ENCODE measurements at regions of chr2 and their contacts with region 1.

Region 1: DNA sequence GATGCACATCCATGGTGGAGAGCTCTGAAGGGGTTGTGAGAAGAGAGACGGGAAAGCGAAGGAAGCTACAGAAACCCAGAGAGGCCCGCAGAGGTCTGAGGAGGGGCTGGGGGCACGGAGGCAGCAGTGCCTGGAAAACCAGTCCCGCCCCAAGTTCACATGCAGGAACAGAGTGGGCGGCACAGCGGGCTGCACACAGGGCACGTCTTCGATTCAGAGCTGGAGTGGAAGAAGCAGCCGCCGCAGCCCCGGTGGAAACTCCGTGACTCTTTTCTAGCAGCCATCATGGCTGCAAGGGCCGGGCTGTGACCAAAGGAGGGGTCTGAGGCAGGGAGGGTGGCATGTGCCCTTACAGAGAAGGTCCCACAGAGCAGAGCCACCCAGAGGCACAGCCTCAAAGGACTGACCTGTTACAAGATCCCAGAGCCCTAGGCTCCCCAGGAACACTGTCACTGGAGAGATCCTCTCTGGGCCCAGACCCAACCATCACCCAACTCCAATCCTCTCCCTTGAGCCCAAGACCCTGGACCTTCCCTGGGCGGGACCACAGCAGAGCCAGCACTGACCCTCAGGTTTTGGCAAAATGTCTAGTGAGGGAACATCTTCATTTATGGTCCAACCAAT is 10.7 kb downstream of the PRKAG3 start:
- DNase-seq: no peak
- H3K4me3 ChIP-seq: no peak overlapping the region
- H3K4me3 Mint-ChIP-seq: peak overlapping the region in 1 of 2 donors; percentile 19
- H3K27ac ChIP-seq: peak overlapping the region; percentile 53 to 68
- H3K27ac Mint-ChIP-seq: peak overlapping the region; percentile 81 to 96 (median 93)
- H3K4me1 ChIP-seq: peaks cover 22 to 25% of the 10 kb centered on the region in 2 donors
- H3K4me1 Mint-ChIP-seq: peaks cover 47% of the 10 kb centered on the region
- H3K27me3 ChIP-seq: peaks cover 0 to 2% of the 10 kb centered on the region in 2 donors
- H3K27me3 Mint-ChIP-seq: peaks cover 5 to 23% (median 11%) of the 10 kb centered on the region in 3 donors
- CTCF ChIP-seq: no peak

Region 2: GRCh38 chr2:218662377-218662776 is 158.5 kb before region 1 on chr2:
- intact Hi-C with region 1: no loop called
- DNase-seq: no peak
- H3K4me3 ChIP-seq: no peak overlapping the region
- H3K4me3 Mint-ChIP-seq: no peak overlapping the region
- H3K27ac ChIP-seq: no peak overlapping the region
- H3K27ac Mint-ChIP-seq: peak overlapping the region in 2 of 7 donors; percentile 20 to 26
- H3K4me1 ChIP-seq: peaks cover 15 to 19% of the 10 kb centered on the region in 2 donors
- H3K4me1 Mint-ChIP-seq: peaks cover 21% of the 10 kb centered on the region
- H3K27me3 ChIP-seq: no peaks in the 10 kb centered on the region
- H3K27me3 Mint-ChIP-seq: peaks cover 0 to 3% (median 0%) of the 10 kb centered on the region in 3 donors
- CTCF ChIP-seq: no peak

Region 3: DNA sequence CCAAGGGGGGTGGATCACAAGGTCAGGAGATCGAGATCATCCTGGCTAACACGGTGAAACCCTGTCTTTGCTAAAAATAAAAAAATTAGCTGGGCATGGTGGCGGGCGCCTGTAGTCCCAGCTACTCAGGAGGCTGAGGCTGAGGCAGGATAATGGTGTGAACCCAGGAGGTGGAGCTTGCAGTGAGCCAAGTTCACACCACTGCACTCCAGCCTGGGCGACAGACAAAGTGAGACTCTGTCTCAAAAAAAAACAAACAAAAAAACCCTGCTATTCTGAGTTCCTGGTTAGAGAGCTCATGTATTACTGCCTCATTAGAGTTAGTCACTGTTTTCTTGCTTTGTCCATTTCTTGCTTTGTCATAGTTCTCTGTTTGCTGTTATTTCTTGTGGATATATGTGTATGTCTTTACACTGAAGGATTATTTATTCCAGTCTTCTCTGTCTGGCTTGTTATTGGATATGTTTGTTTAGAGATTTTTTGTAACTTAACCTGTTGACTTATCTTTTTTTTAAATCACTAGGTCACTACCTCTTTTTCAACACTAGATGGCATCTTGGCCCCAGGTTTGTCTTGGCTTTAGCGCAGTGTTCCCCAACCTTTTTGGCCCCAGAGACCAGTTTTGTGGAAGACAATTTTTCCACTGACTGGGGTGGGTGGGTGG is 93.2 kb before region 1 on chr2:
- intact Hi-C with region 1: loop called (anchors 5 kb)
- DNase-seq: peak; percentile 44 to 67 (median 61)
- H3K4me3 ChIP-seq: no peak overlapping the region
- H3K4me3 Mint-ChIP-seq: no peak overlapping the region
- H3K27ac ChIP-seq: no peak overlapping the region
- H3K27ac Mint-ChIP-seq: peak overlapping the region in 6 of 7 donors; percentile 38 to 90 (median 74)
- H3K4me1 ChIP-seq: peaks cover 43 to 46% of the 10 kb centered on the region in 2 donors
- H3K4me1 Mint-ChIP-seq: peaks cover 49% of the 10 kb centered on the region
- H3K27me3 ChIP-seq: no peaks in the 10 kb centered on the region
- H3K27me3 Mint-ChIP-seq: no peaks in the 10 kb centered on the region
- CTCF ChIP-seq: peak; percentile 80

Region 4: DNA sequence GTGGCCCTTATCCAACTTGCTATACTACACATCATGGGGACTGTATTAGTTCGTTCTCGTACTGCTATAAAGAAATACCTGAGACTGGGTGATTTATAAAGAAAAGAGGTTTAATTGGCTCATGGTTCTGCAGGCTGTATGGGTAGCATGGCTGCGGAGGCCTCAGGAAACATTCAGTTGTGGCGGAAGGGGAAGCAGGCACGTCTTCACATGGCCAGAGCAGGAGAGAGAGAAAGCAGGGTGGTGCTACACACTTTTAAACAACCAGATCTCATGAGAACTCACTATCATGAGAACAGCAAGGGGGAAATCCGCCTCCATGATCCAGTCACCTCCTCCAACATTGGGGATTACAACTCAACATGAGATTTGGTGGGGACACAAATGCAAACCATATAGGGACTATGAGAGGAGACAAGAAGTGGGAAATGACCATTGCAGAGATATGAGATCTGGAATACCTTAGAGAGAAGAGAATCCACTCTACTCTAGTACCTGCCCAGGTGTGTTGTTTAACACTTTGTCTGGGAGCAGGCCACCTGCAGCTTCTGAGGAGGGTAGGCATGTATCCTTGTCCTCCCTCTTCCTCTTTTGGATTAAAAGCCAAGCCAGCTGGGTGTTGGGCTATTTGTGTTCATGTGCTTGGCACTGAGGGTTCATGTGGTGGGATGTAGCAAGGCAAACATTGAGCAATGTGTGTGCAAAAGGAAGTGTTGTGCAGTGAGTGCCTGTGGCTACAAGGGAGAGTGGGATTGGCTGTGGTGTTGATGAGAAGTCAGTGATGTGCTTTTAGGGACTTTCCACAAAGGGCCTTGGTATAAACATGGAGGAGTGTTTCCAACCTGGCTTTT is 87.5 kb before region 1 on chr2:
- intact Hi-C with region 1: loop called (anchors 5 kb)
- DNase-seq: peak; percentile 98 to 100 (median 98)
- H3K4me3 ChIP-seq: peak overlapping the region in 1 of 3 experiments; percentile 8
- H3K4me3 Mint-ChIP-seq: peak overlapping the region; percentile 31 to 57
- H3K27ac ChIP-seq: peak overlapping the region; percentile 95 to 99
- H3K27ac Mint-ChIP-seq: peak overlapping the region; percentile 98 to 100 (median 100)
- H3K4me1 ChIP-seq: peaks cover 51 to 54% of the 10 kb centered on the region in 2 donors
- H3K4me1 Mint-ChIP-seq: peaks cover 67% of the 10 kb centered on the region
- H3K27me3 ChIP-seq: no peaks in the 10 kb centered on the region
- H3K27me3 Mint-ChIP-seq: peaks cover 0 to 1% (median 0%) of the 10 kb centered on the region in 3 donors
- CTCF ChIP-seq: no peak

Region 5: GRCh38 chr2:218745559-218746469 is 75.0 kb before region 1 on chr2:
- intact Hi-C with region 1: loop called in 1 of 2 experiments (anchors 5 kb)
- DNase-seq: no peak
- H3K4me3 ChIP-seq: peak overlapping the region in 1 of 3 experiments; percentile 29
- H3K4me3 Mint-ChIP-seq: peak overlapping the region in 1 of 2 donors; percentile 69
- H3K27ac ChIP-seq: peak overlapping the region; percentile 95 to 98
- H3K27ac Mint-ChIP-seq: peak overlapping the region; percentile 96 to 100 (median 100)
- H3K4me1 ChIP-seq: peaks cover 72 to 80% of the 10 kb centered on the region in 2 donors
- H3K4me1 Mint-ChIP-seq: peaks cover 72% of the 10 kb centered on the region
- H3K27me3 ChIP-seq: no peaks in the 10 kb centered on the region
- H3K27me3 Mint-ChIP-seq: peaks cover 0 to 3% (median 2%) of the 10 kb centered on the region in 3 donors
- CTCF ChIP-seq: no peak

Region 6: GRCh38 chr2:218776488-218776887 is 44.4 kb before region 1 on chr2:
- intact Hi-C with region 1: no loop called
- DNase-seq: peak in 1 of 3 donors; percentile 43
- H3K4me3 ChIP-seq: no peak overlapping the region
- H3K4me3 Mint-ChIP-seq: peak overlapping the region in 1 of 2 donors; percentile 23
- H3K27ac ChIP-seq: peak overlapping the region; percentile 39 to 73
- H3K27ac Mint-ChIP-seq: peak overlapping the region; percentile 67 to 92 (median 76)
- H3K4me1 ChIP-seq: peaks cover 18 to 22% of the 10 kb centered on the region in 2 donors
- H3K4me1 Mint-ChIP-seq: peaks cover 26% of the 10 kb centered on the region
- H3K27me3 ChIP-seq: peaks cover 6 to 20% of the 10 kb centered on the region in 2 donors
- H3K27me3 Mint-ChIP-seq: peaks cover 20 to 35% (median 28%) of the 10 kb centered on the region in 3 donors
- CTCF ChIP-seq: no peak

Region 7: DNA sequence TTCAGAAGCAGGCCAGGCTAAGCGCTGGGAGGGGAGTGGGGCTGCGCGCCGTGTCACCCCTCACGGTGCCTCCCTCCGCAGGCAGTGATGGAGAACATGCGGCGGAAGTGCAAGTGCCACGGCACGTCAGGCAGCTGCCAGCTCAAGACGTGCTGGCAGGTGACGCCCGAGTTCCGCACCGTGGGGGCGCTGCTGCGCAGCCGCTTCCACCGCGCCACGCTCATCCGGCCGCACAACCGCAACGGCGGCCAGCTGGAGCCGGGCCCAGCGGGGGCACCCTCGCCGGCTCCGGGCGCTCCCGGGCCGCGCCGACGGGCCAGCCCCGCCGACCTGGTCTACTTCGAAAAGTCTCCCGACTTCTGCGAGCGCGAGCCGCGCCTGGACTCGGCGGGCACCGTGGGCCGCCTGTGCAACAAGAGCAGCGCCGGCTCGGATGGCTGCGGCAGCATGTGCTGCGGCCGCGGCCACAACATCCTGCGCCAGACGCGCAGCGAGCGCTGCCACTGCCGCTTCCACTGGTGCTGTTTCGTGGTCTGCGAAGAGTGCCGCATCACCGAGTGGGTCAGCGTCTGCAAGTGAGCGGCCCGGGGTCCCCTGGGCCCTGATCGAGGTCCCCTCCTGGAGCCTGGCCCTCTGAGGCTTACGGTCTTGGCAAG is 72.0 kb after region 1 on chr2:
- intact Hi-C with region 1: no loop called
- DNase-seq: peak; percentile 64 to 83 (median 72)
- H3K4me3 ChIP-seq: peak overlapping the region in 1 of 3 experiments; percentile 56
- H3K4me3 Mint-ChIP-seq: peak overlapping the region; percentile 57 to 86
- H3K27ac ChIP-seq: no peak overlapping the region
- H3K27ac Mint-ChIP-seq: peak overlapping the region in 2 of 7 donors; percentile 41 to 52
- H3K4me1 ChIP-seq: peaks cover 9 to 29% of the 10 kb centered on the region in 2 donors
- H3K4me1 Mint-ChIP-seq: peaks cover 19% of the 10 kb centered on the region
- H3K27me3 ChIP-seq: peaks cover 47 to 69% of the 10 kb centered on the region in 2 donors
- H3K27me3 Mint-ChIP-seq: peaks cover 69 to 88% (median 69%) of the 10 kb centered on the region in 3 donors
- CTCF ChIP-seq: peak; percentile 70

Measured in CD14-positive monocyte (primary cell).